Right cardiac atrium (tissue), 5 donors: ENCODE measurements at regions of chr10 and their contacts with region 1.

Region 1: DNA sequence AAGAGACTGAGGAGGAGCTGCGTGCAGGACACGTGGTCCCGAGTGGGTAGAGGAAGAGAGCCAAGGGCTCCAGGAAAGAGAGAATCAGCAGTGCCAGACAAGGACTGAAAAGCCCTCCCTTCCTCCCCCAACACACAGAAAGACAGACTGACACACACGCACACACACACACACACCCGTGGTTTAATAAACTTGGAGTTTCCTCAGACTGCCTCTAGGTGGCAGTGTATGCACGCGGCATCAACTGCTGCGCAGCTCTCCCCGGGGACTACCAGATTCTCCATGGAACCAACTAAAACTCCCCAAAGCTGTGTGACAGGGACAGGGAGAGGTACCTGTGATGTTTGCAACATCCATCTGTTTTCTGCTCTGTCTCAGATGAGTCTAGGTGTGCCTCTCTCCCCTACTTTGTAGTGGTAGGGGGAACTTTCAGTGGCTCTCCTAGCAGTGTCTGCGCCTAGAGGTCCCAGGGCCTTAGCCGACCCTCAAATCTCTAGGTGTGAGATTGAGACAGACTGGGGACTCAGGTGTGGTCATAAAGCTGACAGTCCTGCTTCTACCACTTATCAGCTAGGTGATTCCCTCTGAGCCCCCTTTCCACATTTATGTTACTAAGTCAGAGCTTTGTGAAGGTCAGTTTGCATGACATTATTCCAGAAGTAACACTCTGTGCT is 9.3 kb upstream of the TSPAN14 start:
- DNase-seq: peak; percentile 71 to 83 (median 82)
- ATAC-seq: peak; percentile 86 to 93
- H3K4me3 ChIP-seq: no peak overlapping the region
- H3K27ac ChIP-seq: no peak overlapping the region
- H3K4me1 ChIP-seq: no peaks in the 10 kb centered on the region
- H3K27me3 ChIP-seq: no peaks in the 10 kb centered on the region

Region 2: DNA sequence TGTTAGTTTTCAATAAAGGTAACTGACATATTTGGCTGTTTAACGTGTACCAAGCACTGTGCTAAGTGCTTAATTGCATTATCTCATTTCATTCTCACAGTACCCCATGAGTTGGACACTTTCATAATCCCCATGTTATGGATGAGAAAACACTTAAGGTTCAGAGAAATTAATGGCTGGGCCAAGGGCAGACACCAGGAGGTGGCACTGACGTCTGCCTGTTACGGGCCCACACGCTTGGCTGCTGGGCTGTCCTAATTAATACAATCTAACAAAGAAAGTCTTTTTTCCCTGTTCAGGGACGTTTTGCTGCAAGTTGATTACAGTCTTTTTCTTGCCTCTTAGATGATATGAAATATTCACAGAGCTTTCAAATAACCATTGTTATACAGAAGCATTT is 72.1 kb before region 1 on chr10:
- intact Hi-C with region 1: no loop called
- DNase-seq: no peak
- ATAC-seq: no peak
- H3K4me3 ChIP-seq: no peak overlapping the region
- H3K27ac ChIP-seq: no peak overlapping the region
- H3K4me1 ChIP-seq: no peaks in the 10 kb centered on the region
- H3K27me3 ChIP-seq: no peaks in the 10 kb centered on the region

Region 3: GRCh38 chr10:80382989-80383388 is 61.8 kb before region 1 on chr10:
- intact Hi-C with region 1: loop called in 2 of 4 experiments (anchors 10 kb)
- DNase-seq: peak in 1 of 3 donors; percentile 52
- ATAC-seq: no peak
- H3K4me3 ChIP-seq: no peak overlapping the region
- H3K27ac ChIP-seq: no peak overlapping the region
- H3K4me1 ChIP-seq: no peaks in the 10 kb centered on the region
- H3K27me3 ChIP-seq: no peaks in the 10 kb centered on the region

Region 4: GRCh38 chr10:80498833-80499741 is 54.3 kb after region 1 on chr10:
- intact Hi-C with region 1: loop called in 2 of 4 experiments (anchors 2 to 5 kb)
- DNase-seq: peak; percentile 94 to 96 (median 96)
- ATAC-seq: peak; percentile 91 to 92
- H3K4me3 ChIP-seq: no peak overlapping the region
- H3K27ac ChIP-seq: peak overlapping the region; percentile 79
- H3K4me1 ChIP-seq: peaks cover 62% of the 10 kb centered on the region
- H3K27me3 ChIP-seq: no peaks in the 10 kb centered on the region

Region 5: GRCh38 chr10:80504158-80504811 is 59.5 kb after region 1 on chr10:
- intact Hi-C with region 1: loop called in 2 of 4 experiments (anchors 2 to 5 kb)
- DNase-seq: peak in 2 of 3 donors; percentile 44 to 46
- ATAC-seq: peak; percentile 10 to 31
- H3K4me3 ChIP-seq: no peak overlapping the region
- H3K27ac ChIP-seq: peak overlapping the region; percentile 82
- H3K4me1 ChIP-seq: peaks cover 50% of the 10 kb centered on the region
- H3K27me3 ChIP-seq: no peaks in the 10 kb centered on the region

Region 6: DNA sequence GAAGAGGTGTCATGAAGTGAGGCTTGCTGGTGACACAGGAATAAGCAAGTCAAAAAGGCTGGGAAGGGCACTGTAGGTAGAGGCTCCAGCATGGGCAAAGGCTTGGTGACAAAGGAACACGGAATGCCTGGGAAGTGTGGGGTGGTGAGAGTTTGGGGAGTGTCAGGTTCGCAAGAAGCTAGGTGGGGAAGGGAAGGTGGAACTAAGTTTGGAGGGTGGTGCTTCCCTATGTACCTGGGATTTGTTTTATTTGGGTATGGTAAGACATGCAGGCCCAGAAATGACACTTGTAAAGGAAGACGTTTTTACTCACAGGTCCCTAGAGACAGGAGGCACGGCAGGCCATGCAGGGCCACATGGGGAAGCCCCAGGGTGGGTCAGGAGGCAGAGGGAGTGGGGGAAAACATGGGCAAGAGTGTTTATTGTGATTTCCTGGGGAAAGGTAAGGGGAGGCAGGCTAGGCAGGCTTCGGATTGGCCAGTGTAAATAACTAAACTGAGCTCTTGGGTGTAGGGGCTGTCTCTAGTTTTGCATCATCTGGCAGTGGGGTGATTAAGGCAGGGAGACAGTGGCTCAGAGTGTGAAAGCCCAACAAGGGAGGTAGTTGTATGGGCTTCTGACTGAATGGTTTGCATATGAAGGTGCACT is 145.1 kb after region 1 on chr10:
- intact Hi-C with region 1: loop called in 1 of 4 experiments (anchors 10 kb)
- DNase-seq: no peak
- ATAC-seq: no peak
- H3K4me3 ChIP-seq: no peak overlapping the region
- H3K27ac ChIP-seq: no peak overlapping the region
- H3K4me1 ChIP-seq: no peaks in the 10 kb centered on the region
- H3K27me3 ChIP-seq: no peaks in the 10 kb centered on the region

Region 7: GRCh38 chr10:80924063-80924952 is 479.5 kb after region 1 on chr10:
- intact Hi-C with region 1: loop called in 1 of 4 experiments (anchors 10 kb)
- DNase-seq: peak in 2 of 3 donors; percentile 21 to 43
- ATAC-seq: peak in 1 of 2 donors; percentile 59
- H3K4me3 ChIP-seq: no peak overlapping the region
- H3K27ac ChIP-seq: no peak overlapping the region
- H3K4me1 ChIP-seq: no peaks in the 10 kb centered on the region
- H3K27me3 ChIP-seq: peaks cover 7% of the 10 kb centered on the region